GM12878 (cell line): ENCODE measurements at regions of chr5 and their contacts with region 1.

Region 1: DNA sequence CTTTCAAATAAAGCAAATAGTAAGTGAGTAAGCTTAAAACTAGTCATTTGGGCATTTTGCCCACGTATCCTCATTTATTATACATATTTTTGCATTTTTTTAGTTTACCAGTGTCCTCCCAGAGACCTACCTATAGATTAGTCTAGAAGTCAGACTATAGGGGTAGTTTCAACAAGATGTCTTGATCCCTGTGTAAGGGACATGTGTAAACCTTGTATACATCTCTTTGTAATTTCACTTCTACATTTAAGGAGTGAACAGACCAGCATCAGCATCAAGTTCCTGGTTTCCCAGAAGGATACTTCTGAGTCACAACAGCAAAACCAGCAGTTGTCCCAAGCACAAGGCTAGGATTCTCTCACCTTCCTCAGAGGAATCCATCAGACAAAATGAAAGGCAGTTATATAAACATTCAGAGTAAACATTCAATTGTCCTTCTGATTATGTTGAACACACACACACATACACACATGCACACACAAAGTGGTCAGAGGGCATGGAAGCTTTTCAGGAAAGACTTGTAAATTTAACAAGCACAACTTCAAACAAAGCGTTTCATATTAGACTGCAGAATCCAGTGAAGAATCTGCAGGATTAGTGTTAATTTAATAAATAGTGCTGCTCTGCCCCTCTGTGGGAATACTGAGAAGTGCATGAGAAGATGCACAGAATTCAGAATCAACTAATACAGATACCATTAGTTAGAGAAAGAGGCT is 55.4 kb downstream of the HINT1 start:
- DNase-seq: peak; percentile 12
- ATAC-seq: peak; percentile 94
- H3K4me3 ChIP-seq: no peak overlapping the region
- H3K27ac ChIP-seq: no peak overlapping the region
- H3K4me1 ChIP-seq: no peaks in the 10 kb centered on the region
- H3K27me3 ChIP-seq: 0 out of 4 replicates have a peak, but pooled peaks cover 0 to 2% of the 10 kb centered on the region in 2 experiments
- CTCF ChIP-seq: peak; percentile 60 to 76 (median 68)
- EP300 ChIP-seq: no peak
- POLR2A ChIP-seq: no peak
- RAD21 ChIP-seq: peak; percentile 84

Region 2: GRCh38 chr5:130109152-130109551 is 1000.5 kb before region 1 on chr5:
- CTCF ChIA-PET with region 1: interaction called, 5 read pairs
- POLR2A ChIA-PET with region 1: no interaction called
- RAD21 ChIA-PET with region 1: interaction called, 4 read pairs
- SMC1A ChIA-PET with region 1: interaction called, 4 read pairs
- in situ Hi-C with region 1: loop called (anchors 10 kb)
- intact Hi-C with region 1: loop called (anchors 2 kb)
- DNase-seq: no peak
- ATAC-seq: peak; percentile 78
- H3K4me3 ChIP-seq: no peak overlapping the region
- H3K27ac ChIP-seq: no peak overlapping the region
- H3K4me1 ChIP-seq: peaks cover 6% of the 10 kb centered on the region; the same call in 1 of the 2 replicates
- H3K27me3 ChIP-seq: no peaks in the 10 kb centered on the region
- CTCF ChIP-seq: peak; percentile 42 to 54 (median 45); a peak in 4 of 6 replicates
- EP300 ChIP-seq: no peak
- POLR2A ChIP-seq: no peak
- RAD21 ChIP-seq: peak; percentile 64

Region 3: DNA sequence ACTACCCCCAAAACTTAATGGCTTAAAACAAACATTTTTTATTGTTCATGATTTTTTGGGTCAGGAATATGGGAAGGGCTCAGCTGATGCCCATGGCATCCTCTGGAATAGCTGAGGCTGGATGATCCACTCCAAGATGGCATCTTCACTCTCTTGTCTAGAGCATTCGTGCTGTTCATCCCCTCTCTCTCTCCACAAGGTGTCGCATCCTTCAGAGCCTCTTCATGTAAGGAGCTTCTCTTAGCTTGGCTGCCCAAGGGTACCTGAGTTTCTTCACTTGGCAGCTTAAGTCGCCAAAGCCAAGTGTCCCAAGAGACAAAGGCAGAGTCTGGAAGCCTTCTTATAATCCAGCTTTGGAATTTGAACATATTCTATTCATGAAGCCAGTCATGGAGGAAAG is 910.8 kb before region 1 on chr5:
- CTCF ChIA-PET with region 1: interaction called, 4 read pairs
- POLR2A ChIA-PET with region 1: no interaction called
- RAD21 ChIA-PET with region 1: no interaction called
- SMC1A ChIA-PET with region 1: interaction called, 4 read pairs
- in situ Hi-C with region 1: no loop called
- intact Hi-C with region 1: loop called (anchors 5 kb)
- DNase-seq: no peak
- ATAC-seq: peak; percentile 89
- H3K4me3 ChIP-seq: no peak overlapping the region
- H3K27ac ChIP-seq: no peak overlapping the region
- H3K4me1 ChIP-seq: no peaks in the 10 kb centered on the region
- H3K27me3 ChIP-seq: no peaks in the 10 kb centered on the region
- CTCF ChIP-seq: peak; percentile 35 to 62 (median 42); a peak in 5 of 6 replicates
- EP300 ChIP-seq: no peak
- POLR2A ChIP-seq: no peak
- RAD21 ChIP-seq: peak; percentile 47

Region 4: DNA sequence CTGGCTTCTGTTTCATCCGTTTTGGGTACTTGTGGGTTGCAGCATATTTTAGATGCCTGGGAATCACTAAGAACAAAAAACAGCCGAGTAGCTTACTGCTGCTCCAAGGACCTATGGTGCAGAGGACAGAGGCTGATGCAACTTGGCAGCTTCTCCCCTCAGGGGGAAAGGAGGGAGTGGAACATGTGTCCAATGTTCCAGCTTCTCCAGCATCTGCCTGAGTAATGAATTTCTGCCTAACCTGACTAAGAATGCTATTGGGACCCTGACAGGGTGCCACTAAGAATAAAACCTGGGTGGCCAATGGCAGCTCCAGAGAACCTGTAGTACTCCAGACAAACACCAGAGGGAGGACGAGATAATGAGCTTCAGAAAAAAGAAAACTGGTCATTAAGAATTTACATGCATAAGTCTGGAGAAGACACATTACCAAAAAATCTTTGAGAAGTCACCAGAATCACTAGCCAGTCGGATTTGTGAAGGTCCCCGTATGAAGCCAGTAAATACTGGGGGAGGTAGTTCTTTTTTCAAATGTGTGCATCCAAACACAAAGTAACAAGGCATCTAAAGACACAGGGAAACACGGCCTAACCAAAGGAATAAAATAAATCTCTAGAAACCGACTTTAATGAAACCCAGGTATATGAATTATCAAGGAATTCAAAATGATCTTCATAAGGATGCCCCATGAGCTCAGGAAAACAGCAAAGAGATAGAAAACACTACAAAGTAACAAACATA is 238.2 kb before region 1 on chr5:
- CTCF ChIA-PET with region 1: interaction called, 25 read pairs
- POLR2A ChIA-PET with region 1: no interaction called
- RAD21 ChIA-PET with region 1: interaction called, 5 read pairs
- SMC1A ChIA-PET with region 1: interaction called, 11 read pairs
- in situ Hi-C with region 1: loop called (anchors 5 kb)
- intact Hi-C with region 1: loop called (anchors 1 kb)
- DNase-seq: no peak
- ATAC-seq: peak; percentile 86
- H3K4me3 ChIP-seq: no peak overlapping the region
- H3K27ac ChIP-seq: no peak overlapping the region
- H3K4me1 ChIP-seq: no peaks in the 10 kb centered on the region
- H3K27me3 ChIP-seq: no peaks in the 10 kb centered on the region
- CTCF ChIP-seq: peak; percentile 64 to 66 (median 65)
- EP300 ChIP-seq: no peak
- POLR2A ChIP-seq: no peak
- RAD21 ChIP-seq: peak; percentile 63